Psoas muscle (tissue), 8 donors: ENCODE measurements at regions of chr15 and their contacts with region 1.

Region 1: GRCh38 chr15:75367913-75368688 is at the start of gene MAN2C1:
- DNase-seq: peak; percentile 94 to 98
- ATAC-seq: peak; percentile 96 to 97 (median 96)
- H3K4me3 ChIP-seq: peak within 1 kb of the TSS; percentile 99
- H3K27ac ChIP-seq: peak within 1 kb of the TSS; percentile 100
- H3K4me1 ChIP-seq: peaks cover 20% of the 10 kb centered on the region
- H3K27me3 ChIP-seq: no peaks in the 10 kb centered on the region
- CTCF ChIP-seq: peak; percentile 73
- total RNA-seq, gene MAN2C1: 86.5 to 124 (median 106) TPM

Region 2: DNA sequence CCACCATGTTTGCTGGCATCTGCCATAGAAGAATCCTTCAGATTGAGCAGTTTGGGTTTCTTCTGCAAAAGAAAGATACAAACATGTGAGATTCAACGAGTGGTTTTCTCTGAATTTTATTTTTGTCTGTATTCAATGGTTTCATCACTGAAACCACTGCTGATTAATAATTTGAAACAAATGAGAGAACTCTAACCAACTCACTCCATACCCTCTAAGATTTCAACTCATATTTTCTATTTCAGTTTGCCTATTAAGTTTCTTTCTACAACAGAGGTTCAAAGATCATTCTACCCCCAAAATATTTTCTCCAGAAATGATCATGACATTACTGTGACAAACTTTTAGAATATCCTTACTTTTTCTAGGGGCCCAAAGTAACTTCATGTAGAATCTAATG is 39.0 kb after region 1 on chr15:
- intact Hi-C with region 1: loop called in 1 of 2 experiments (anchors 5 kb)
- DNase-seq: no peak
- ATAC-seq: no peak
- H3K4me3 ChIP-seq: no peak overlapping the region
- H3K27ac ChIP-seq: no peak overlapping the region
- H3K4me1 ChIP-seq: no peaks in the 10 kb centered on the region
- H3K27me3 ChIP-seq: no peaks in the 10 kb centered on the region
- CTCF ChIP-seq: no peak

Region 3: DNA sequence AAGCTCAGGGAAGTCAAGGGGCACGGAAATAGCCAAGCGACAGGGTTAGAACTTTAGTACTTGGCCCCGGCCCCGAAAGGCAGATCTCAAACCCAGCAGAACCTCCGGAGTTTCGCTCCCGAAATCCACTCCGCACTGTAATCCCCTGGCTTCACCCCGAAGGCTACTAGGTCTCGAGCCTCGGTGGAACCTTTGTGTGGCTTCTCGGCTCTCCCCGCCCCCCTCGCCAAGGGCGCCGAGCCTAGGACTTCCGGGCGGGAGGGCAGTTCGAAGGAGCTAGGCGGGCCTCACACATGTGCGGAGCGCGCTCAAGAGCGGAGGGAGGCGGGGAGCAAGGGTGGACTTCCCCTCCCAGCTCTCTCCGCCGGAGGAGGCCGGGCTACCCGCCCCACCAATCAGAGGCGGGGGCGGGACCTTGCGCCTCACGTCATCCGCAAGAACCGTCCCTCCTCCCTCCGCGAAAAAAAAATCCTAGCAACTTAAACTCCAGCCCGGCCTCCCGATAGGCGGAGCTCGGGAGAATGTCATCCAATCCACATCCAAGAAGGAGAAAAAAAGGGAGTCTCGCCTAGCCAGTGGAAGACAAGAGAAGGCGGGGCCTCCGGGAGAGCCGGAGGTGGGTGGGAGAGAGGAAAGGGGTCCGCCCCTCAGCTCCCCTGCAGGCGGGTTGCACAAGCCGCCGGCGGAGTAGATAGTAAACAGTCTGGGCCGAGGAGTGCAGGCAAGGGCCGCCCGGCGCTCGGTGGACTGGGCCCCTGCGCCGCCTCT is 85.8 kb after region 1 on chr15:
- intact Hi-C with region 1: loop called (anchors 2 kb)
- DNase-seq: peak; percentile 98 to 99
- ATAC-seq: peak; percentile 65 to 74 (median 70)
- H3K4me3 ChIP-seq: peak overlapping the region; percentile 96
- H3K27ac ChIP-seq: peak overlapping the region; percentile 99
- H3K4me1 ChIP-seq: peaks cover 15% of the 10 kb centered on the region
- H3K27me3 ChIP-seq: no peaks in the 10 kb centered on the region
- CTCF ChIP-seq: no peak

Region 4: DNA sequence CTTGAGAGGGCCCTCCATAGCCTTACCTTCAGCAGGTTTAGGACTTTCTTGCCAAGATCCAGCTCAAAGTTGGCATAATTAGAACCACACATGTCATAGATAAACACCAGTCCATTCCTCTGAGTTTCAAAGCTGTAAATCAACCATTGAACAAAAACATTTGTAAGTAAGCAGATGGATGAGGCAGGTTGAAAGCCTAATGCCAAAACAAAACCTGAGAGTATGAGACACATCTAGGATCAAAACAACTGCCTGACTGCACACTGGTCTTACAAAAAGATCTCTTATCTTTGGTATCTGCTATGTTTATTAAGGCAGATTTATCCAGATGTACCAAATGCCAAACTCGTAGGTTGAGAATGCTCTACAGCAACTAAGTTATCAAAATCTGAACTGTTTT is 149.1 kb after region 1 on chr15:
- intact Hi-C with region 1: no loop called
- DNase-seq: no peak
- ATAC-seq: no peak
- H3K4me3 ChIP-seq: no peak overlapping the region
- H3K27ac ChIP-seq: no peak overlapping the region
- H3K4me1 ChIP-seq: no peaks in the 10 kb centered on the region
- H3K27me3 ChIP-seq: no peaks in the 10 kb centered on the region
- CTCF ChIP-seq: no peak

Region 5: GRCh38 chr15:75625542-75626347 is 257.6 kb after region 1 on chr15 and contains the start of gene SNUPN:
- intact Hi-C with region 1: loop called in 1 of 2 experiments (anchors 10 kb)
- DNase-seq: peak; percentile 95 to 97
- ATAC-seq: peak; percentile 94 to 95 (median 95)
- H3K4me3 ChIP-seq: peak within 1 kb of the TSS; percentile 81
- H3K27ac ChIP-seq: peak within 1 kb of the TSS; percentile 94
- H3K4me1 ChIP-seq: peaks cover 8% of the 10 kb centered on the region
- H3K27me3 ChIP-seq: no peaks in the 10 kb centered on the region
- CTCF ChIP-seq: no peak
- total RNA-seq, gene SNUPN: 17.1 to 21.9 (median 19.0) TPM

Region 6: DNA sequence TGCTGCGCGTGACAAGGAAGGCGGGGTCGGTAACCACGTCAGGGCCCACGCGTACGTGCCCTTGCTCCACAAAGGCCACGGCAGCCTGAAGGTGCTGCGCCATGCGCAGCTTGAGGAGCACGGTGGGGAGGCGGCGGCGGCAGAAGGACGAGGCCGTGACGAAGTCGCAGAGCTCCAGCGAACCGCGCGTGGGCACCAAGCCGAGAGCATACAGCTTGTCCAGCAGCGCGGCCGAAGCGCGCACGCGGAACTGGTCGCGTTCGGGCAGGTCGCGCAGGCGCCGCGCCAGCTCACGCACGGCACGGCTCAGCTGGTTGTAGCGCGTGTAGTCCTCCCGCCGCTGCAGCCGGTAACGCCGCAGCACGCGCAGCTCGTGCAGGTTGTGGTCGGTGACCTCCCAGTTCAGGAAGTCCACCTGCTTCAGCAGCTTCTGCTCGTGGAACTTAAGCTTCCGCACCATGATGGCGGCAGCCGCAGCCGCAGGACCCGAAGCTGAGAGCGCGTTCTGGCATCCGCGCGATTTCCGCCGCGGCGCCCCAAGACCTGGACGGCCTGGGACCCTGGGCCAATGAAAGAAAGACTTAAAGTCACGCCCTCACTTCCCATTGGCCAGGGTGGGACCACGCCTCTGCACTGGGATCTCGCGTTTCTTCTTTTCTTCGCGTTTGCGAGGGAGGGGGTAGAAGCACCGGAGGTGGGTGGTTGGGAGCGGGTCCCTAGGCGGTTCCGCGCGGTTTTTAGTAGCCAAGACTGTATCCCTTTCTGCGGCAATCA is 271.8 kb after region 1 on chr15 and contains the start of gene IMP3:
- intact Hi-C with region 1: loop called in 1 of 2 experiments (anchors 5 kb)
- DNase-seq: peak; percentile 94 to 97
- ATAC-seq: peak; percentile 94 to 98 (median 96)
- H3K4me3 ChIP-seq: peak within 1 kb of the TSS; percentile 94
- H3K27ac ChIP-seq: peak within 1 kb of the TSS; percentile 96
- H3K4me1 ChIP-seq: peaks cover 23% of the 10 kb centered on the region
- H3K27me3 ChIP-seq: no peaks in the 10 kb centered on the region
- CTCF ChIP-seq: no peak
- total RNA-seq, gene IMP3: 41.6 to 51.0 (median 43.8) TPM

Region 7: DNA sequence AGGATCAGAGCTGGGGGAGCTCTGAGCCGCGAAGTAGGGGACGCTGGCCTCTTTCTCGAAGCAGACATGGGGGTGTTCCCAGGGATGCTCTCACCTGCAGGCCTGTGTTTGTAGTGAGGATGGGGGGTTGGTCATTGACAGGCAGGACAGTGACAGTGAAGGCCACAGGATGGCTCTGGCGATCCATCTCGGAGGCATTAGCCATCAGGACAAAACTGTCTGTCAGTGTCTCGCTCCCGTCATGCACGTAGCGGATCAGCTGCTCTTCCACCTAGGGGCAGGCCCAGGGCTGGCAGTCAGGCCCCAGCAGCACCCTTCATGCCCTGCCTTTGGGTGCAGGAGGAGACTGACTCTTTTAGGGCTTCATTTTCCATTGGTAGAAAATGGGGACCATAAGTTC is 316.5 kb after region 1 on chr15:
- intact Hi-C with region 1: loop called in 1 of 2 experiments (anchors 5 kb)
- DNase-seq: no peak
- ATAC-seq: no peak
- H3K4me3 ChIP-seq: no peak overlapping the region
- H3K27ac ChIP-seq: no peak overlapping the region
- H3K4me1 ChIP-seq: no peaks in the 10 kb centered on the region
- H3K27me3 ChIP-seq: no peaks in the 10 kb centered on the region
- CTCF ChIP-seq: no peak

Region 8: DNA sequence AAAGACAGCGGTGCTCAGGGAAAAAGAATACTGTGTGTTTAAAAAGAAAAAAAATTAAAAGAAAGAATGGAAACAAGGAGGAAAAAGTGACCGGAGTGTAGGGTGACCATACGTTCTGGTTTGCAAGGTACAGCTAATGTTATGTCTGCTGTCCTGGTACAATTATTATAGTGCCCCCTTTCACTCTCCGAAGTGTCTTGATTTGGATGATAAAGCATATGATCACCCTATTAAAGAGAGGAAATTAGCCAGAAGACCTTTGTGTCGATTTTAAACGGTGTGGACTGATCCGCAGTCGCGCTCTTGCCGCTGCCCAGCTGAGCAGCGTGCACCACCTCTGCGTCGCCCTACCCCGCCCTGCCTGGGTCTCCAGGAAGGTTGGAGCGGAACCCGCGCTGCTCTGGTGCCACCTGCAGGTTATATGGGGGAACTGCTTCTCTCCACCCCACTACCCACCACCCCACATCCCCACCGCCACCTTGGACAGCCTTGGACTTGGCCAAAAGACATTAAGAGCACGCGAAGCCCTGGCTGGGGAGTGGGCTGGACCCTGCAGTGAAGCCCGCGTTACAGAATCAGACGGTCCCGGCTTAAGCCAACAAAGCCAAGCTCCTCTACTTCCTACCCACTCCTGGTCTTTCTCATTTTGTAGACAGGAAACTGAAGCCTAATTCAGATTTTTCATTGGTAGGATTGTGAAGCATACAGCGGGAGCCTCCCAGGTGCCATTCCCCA is 433.9 kb after region 1 on chr15:
- intact Hi-C with region 1: loop called in 1 of 2 experiments (anchors 2 kb)
- DNase-seq: peak; percentile 80 to 91
- ATAC-seq: peak; percentile 98 to 100 (median 99)
- H3K4me3 ChIP-seq: peak overlapping the region; percentile 48
- H3K27ac ChIP-seq: no peak overlapping the region
- H3K4me1 ChIP-seq: no peaks in the 10 kb centered on the region
- H3K27me3 ChIP-seq: no peaks in the 10 kb centered on the region
- CTCF ChIP-seq: peak; percentile 90